Activated T-helper 1 cell treated with anti-CD3 and anti-CD28 coated beads, Interleukin-12 subunit alpha, Interleukin-12 subunit beta, Interleukin-2, Interleukin-4 antibody, amounts not matched to agents 30 ng/mL and 10 ng/mL and 1 ng/mL, durations not matched to agents 14 hours and 24 hours and 36 hours (primary cell): ENCODE measurements at regions of chr9 and their contacts with region 1.

Region 1: GRCh38 chr9:122904823-122905710 is at the start of gene RC3H2:
- DNase-seq: peak; percentile 97
- H3K4me3 Mint-ChIP-seq: peak within 1 kb of the TSS; percentile 95
- H3K27ac Mint-ChIP-seq: peak within 1 kb of the TSS; percentile 96
- H3K4me1 Mint-ChIP-seq: peaks cover 49% of the 10 kb centered on the region
- H3K27me3 Mint-ChIP-seq: no peaks in the 10 kb centered on the region
- total RNA-seq, gene RC3H2: 39.8 and 49.3 TPM in 2 replicates

Region 2: GRCh38 chr9:122464633-122465567 is 440.2 kb before region 1 on chr9:
- intact Hi-C with region 1: loop called (anchors 10 kb)
- DNase-seq: peak; percentile 59
- H3K4me3 Mint-ChIP-seq: peak overlapping the region; percentile 81
- H3K27ac Mint-ChIP-seq: peak overlapping the region; percentile 80
- H3K4me1 Mint-ChIP-seq: peaks cover 17% of the 10 kb centered on the region
- H3K27me3 Mint-ChIP-seq: peaks cover 26% of the 10 kb centered on the region

Region 3: DNA sequence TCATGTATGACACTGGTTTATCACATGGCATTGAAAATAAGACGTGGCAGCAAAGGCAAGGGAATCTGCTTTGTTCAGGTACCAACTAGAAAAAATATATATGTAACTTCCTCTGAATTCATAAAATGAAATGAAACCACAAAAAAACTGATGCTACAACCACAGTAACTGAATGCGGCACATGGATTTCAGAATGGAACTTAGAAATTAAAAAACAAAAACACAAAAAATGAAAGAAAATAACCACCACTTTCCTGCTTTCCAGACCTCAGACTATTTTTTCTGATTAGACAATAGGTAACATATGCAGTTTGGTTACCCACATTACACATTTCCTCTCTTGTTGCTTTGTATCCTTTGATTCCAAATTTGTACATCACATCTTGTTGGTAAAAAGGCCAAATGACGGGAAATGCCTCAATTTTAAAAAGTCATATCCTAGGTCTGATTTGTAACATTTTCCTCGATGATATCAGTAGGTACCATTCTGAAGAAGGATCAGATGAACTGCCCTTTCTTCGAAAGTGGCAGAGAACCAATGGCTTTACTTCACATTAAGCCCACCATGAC is 58.6 kb before region 1 on chr9:
- intact Hi-C with region 1: loop called (anchors 5 kb)
- DNase-seq: no peak
- H3K4me3 Mint-ChIP-seq: peak overlapping the region; percentile 28
- H3K27ac Mint-ChIP-seq: peak overlapping the region; percentile 90
- H3K4me1 Mint-ChIP-seq: peaks cover 46% of the 10 kb centered on the region
- H3K27me3 Mint-ChIP-seq: no peaks in the 10 kb centered on the region

Region 4: DNA sequence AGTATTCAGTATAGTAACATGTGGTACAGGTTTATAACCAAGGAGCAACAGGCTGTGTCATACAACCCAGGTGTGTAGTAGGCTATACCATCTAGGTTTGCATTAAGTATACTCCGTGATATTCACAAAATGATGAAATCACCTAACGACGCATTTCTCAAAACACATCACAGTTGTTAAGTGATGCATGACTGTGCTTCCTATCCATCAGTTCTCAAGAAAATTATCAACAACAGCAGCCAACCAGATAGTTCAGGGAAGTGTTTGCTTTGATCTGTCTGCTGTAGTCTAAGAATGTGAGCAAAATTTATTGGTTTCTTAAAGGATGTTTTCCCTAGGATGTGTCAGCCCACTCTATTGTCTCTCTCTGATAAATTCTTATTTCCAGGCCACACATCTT is 18.9 kb after region 1 on chr9:
- intact Hi-C with region 1: no loop called
- DNase-seq: no peak
- H3K4me3 Mint-ChIP-seq: no peak overlapping the region
- H3K27ac Mint-ChIP-seq: no peak overlapping the region
- H3K4me1 Mint-ChIP-seq: peaks cover 5% of the 10 kb centered on the region
- H3K27me3 Mint-ChIP-seq: no peaks in the 10 kb centered on the region

Region 5: GRCh38 chr9:122940603-122941559 is 35.8 kb after region 1 on chr9 and contains the start of gene RABGAP1:
- intact Hi-C with region 1: loop called (anchors 1 kb)
- DNase-seq: peak; percentile 97
- H3K4me3 Mint-ChIP-seq: peak within 1 kb of the TSS; percentile 98
- H3K27ac Mint-ChIP-seq: peak within 1 kb of the TSS; percentile 76
- H3K4me1 Mint-ChIP-seq: peaks cover 27% of the 10 kb centered on the region
- H3K27me3 Mint-ChIP-seq: peaks cover 1% of the 10 kb centered on the region
- total RNA-seq, gene RABGAP1: 26.6 and 30.2 TPM in 2 replicates

Region 6: DNA sequence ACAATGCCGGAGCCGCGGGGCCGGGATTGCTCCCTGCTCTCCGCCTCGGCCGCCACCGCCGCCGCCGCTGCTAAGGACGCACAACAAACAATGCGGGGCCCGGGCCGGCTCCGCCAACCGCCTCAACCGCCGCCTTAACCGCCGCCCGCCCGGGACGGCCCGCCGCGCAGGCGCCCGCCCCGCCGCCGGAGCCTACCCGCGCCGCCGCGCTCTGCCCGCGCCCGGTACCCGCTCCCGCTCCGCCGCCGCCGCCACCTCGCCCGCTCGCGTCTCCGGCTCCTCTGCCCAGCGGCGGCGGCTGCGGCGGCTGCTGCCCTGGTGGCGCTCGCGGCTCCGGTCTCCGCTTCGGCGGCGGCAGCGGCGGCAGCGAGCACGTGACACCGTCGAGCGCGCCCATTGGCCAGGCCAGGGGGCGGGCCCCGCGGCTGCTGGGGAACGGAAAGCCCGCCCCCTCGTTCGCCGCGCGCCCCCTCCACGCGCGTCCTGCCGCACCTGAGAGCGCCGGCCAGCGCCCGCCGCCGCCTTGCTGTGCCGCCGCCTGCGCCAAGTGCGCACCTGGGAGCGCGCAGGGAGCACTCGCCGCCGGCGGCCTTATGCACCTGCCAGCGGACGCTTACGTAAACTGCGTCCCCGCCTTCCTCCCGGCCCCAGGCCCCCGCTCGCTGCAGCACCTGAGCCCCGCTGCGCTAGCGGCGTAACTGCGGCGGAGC is 363.3 kb after region 1 on chr9 and contains the start of gene STRBP:
- intact Hi-C with region 1: loop called (anchors 2 kb)
- DNase-seq: peak; percentile 91
- H3K4me3 Mint-ChIP-seq: peak within 1 kb of the TSS; percentile 86
- H3K27ac Mint-ChIP-seq: peak within 1 kb of the TSS; percentile 53
- H3K4me1 Mint-ChIP-seq: peaks cover 6% of the 10 kb centered on the region
- H3K27me3 Mint-ChIP-seq: peaks cover 7% of the 10 kb centered on the region
- total RNA-seq, gene STRBP: 22.1 and 24.2 TPM in 2 replicates